Gastrocnemius medialis (tissue), 4 donors: ENCODE measurements at regions of chr2 and their contacts with region 1.

Region 1: DNA sequence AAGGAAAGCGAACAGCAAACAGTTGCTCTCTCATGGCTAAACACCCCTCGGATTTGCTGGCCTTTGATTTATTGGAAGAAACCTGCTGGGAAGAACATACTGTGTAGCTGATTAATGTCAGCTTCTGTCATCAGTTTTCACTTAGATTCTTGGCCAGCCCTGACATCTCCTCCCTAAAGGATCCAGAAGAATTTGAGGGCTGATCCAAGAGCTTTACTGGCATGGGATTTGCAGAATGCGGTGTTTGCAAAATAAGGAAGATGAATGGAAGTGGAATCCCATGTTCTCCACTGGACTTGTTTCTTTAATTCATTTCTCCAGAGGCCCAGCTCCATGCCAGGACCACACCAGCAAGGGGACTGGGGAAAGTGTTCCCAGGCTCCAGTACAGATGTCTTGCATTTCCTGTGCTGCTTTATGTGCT is 80.5 kb downstream of the RDH14 start:
- DNase-seq: peak; percentile 35 to 74
- ATAC-seq: peak; percentile 55 to 78
- H3K4me3 ChIP-seq: no peak overlapping the region
- H3K27ac ChIP-seq: peak overlapping the region in 1 of 4 donors; percentile 48
- H3K4me1 ChIP-seq: no peaks in the 10 kb centered on the region
- H3K27me3 ChIP-seq: no peaks in the 10 kb centered on the region
- CTCF ChIP-seq: no peak
- POLR2A ChIP-seq: no peak

Region 2: GRCh38 chr2:18440141-18440661 is 39.8 kb before region 1 on chr2:
- in situ Hi-C with region 1: no loop called
- intact Hi-C with region 1: loop called (anchors 5 kb)
- DNase-seq: peak in 1 of 2 donors; percentile 38
- ATAC-seq: peak; percentile 46 to 55
- H3K4me3 ChIP-seq: no peak overlapping the region
- H3K27ac ChIP-seq: peak overlapping the region in 2 of 4 donors; percentile 9 to 40
- H3K4me1 ChIP-seq: peaks cover 19 to 22% of the 10 kb centered on the region in 2 donors
- H3K27me3 ChIP-seq: no peaks in the 10 kb centered on the region
- CTCF ChIP-seq: no peak
- POLR2A ChIP-seq: no peak